ENCODE measurements at regions of chr12 and their contacts with region 1.

Region 1: GRCh38 chr12:76444408-76444984 is 96.3 kb upstream of the BBS10 start:
- DNase-seq: no peak
- H3K4me3 Mint-ChIP-seq: no peak overlapping the region
- H3K27ac Mint-ChIP-seq: peak overlapping the region; percentile 0
- H3K4me1 Mint-ChIP-seq: peaks cover 21% of the 10 kb centered on the region
- H3K27me3 Mint-ChIP-seq: no peaks in the 10 kb centered on the region

Region 2: GRCh38 chr12:76374386-76375020 is 70.0 kb before region 1 on chr12:
- intact Hi-C with region 1: loop called (anchors 5 kb)
- DNase-seq: no peak
- H3K4me3 Mint-ChIP-seq: no peak overlapping the region
- H3K27ac Mint-ChIP-seq: no peak overlapping the region
- H3K4me1 Mint-ChIP-seq: peaks cover 13% of the 10 kb centered on the region
- H3K27me3 Mint-ChIP-seq: no peaks in the 10 kb centered on the region

Region 3: DNA sequence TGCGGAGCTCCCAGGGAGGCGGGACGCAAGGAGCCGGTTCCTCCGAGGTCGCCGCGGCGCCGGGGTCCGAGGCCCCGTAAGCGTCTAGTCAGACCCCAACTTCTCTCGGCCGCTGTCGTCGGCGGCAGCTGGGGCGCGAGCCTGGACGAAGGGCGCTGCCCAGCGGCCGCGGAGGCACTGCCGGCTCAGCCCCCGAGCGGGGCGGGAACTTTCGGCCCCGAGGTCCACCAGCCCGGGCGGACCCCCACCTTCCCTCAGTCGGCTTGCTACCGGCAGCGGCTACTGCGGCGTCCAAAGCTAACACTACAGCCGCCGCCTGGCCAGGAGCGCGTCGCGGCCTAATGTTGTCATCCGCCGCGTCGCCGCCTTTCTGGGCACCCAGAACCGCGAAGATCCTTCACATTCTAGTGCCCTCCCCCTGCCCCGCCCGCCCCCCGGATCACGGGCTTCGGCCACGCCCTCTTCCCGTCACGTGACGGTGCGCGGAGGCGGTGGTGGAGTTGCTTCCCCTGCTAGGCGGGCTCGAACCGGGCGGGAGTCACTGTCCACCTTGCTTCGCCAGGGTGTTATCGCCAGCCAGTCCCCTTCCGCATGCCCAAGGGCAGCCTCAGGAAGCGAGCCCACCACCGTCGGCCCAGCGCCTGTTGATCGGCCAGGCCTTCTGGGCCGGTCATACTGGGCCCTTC is 115.0 kb after region 1 on chr12 and contains the start of gene OSBPL8:
- intact Hi-C with region 1: no loop called
- DNase-seq: peak; percentile 89
- H3K4me3 Mint-ChIP-seq: peak within 1 kb of the TSS; percentile 93
- H3K27ac Mint-ChIP-seq: peak within 1 kb of the TSS; percentile 96
- H3K4me1 Mint-ChIP-seq: peaks cover 39% of the 10 kb centered on the region
- H3K27me3 Mint-ChIP-seq: no peaks in the 10 kb centered on the region
- total RNA-seq, gene OSBPL8: 87.9 TPM in 2 replicates

Measured in activated T-helper 2 cell treated with anti-CD3 and anti-CD28 coated beads, Interferon-gamma antibody, Interleukin-2, Interleukin-4, amounts not matched to agents 10 μg/mL and 5 μg/mL and 100 μg/mL, durations not matched to agents 14 hours and 24 hours and 36 hours (primary cell).